ENCODE measurements at regions of chr14 and their contacts with region 1.

Region 1: DNA sequence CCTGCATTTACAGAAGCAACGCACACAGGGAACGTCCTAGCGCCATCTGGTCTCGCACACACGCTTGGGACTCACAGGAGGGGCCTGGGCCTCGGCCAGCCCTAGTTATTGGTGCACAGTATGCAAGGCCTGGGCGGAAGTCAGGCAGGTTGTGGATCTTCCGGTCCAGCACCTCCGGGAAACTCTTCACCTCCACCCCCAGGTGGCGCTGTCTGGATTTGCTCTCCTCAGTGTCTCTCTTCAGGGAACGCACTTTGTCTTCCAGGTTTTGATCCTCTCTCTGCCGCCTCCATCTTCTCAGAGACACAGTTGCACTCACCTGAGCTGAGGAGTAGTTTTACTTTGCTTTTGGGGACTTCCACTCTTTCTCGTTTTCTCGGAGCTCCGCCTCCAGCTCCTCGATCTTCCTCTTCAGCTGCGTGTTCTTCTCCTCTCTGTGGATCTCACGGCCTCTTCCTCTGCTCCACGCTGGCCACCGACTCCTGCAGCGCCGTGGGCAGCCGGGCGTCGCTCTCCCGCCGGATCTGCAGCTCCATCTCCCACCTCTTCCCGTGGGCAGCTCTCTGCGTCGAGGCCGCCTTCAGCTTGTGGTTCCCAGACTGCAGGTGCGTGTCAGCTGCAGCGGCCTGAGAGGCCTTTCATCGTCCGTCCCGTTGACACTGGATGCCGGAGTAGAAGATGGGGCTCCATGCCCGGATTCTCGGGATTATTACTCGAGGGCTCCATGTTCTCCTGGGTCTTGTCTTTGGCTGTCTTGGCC is 933.8 kb downstream of the TMEM121 start:
- DNase-seq: peak; percentile 84
- ATAC-seq: peak; percentile 76
- H3K4me3 Mint-ChIP-seq: no peak overlapping the region
- H3K27ac Mint-ChIP-seq: no peak overlapping the region
- H3K4me1 Mint-ChIP-seq: peaks cover 2% of the 10 kb centered on the region
- H3K27me3 Mint-ChIP-seq: no peaks in the 10 kb centered on the region

Region 2: DNA sequence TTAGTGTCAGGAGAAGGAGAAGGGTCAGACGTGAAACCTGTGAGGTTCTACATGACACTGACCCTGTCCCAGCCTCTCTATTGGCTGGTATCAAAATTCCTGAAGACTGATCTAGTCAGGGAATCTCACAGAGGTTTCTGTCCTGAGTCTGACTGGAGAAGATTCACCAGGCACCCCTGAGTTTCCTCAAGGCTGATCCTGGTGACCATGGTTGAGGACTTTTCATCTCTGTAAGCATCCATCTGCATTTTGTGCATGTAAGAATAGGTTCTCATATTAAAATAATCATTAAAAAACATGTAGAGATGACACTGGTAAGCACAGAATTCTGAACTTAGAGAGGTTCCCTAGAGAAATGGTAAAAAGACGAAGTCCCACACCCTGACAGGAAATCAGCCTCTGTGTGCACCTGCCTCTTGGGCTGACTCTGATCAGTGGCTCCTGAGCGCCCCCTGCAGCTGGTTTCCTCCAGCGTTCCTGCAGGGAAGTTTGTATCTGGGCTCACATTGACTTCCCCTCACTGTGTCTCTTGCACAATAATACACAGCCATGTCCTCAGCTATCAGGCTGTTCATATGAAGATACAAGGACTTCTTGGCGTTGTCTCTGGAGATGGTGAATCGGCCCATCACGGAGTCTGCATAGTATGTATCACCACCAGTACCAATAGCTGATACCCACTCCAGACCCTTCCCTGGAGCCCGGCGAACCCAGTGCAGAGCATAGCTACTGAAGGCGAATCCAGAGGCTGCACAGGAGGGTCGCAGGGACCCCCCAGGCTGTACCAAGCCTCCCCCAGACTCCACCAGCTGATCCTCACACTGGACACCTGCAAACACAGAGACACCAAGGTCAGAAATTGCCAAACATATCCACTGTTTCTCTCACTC is 58.1 kb after region 1 on chr14:
- CTCF ChIA-PET with region 1: interaction called, 11 read pairs
- POLR2A ChIA-PET with region 1: no interaction called
- intact Hi-C with region 1: loop called (anchors 1 to 2 kb)
- DNase-seq: peak; percentile 92
- ATAC-seq: peak; percentile 84
- H3K4me3 Mint-ChIP-seq: no peak overlapping the region
- H3K27ac Mint-ChIP-seq: no peak overlapping the region
- H3K4me1 Mint-ChIP-seq: peaks cover 13% of the 10 kb centered on the region
- H3K27me3 Mint-ChIP-seq: no peaks in the 10 kb centered on the region